Activated T-helper 1 cell treated with anti-CD3 and anti-CD28 coated beads, Interleukin-12 subunit alpha, Interleukin-12 subunit beta, Interleukin-2, Interleukin-4 antibody, amounts not matched to agents 30 ng/mL and 10 ng/mL and 1 ng/mL, durations not matched to agents 14 hours and 24 hours and 36 hours (primary cell): ENCODE measurements at regions of chr19 and their contacts with region 1.

Region 1: DNA sequence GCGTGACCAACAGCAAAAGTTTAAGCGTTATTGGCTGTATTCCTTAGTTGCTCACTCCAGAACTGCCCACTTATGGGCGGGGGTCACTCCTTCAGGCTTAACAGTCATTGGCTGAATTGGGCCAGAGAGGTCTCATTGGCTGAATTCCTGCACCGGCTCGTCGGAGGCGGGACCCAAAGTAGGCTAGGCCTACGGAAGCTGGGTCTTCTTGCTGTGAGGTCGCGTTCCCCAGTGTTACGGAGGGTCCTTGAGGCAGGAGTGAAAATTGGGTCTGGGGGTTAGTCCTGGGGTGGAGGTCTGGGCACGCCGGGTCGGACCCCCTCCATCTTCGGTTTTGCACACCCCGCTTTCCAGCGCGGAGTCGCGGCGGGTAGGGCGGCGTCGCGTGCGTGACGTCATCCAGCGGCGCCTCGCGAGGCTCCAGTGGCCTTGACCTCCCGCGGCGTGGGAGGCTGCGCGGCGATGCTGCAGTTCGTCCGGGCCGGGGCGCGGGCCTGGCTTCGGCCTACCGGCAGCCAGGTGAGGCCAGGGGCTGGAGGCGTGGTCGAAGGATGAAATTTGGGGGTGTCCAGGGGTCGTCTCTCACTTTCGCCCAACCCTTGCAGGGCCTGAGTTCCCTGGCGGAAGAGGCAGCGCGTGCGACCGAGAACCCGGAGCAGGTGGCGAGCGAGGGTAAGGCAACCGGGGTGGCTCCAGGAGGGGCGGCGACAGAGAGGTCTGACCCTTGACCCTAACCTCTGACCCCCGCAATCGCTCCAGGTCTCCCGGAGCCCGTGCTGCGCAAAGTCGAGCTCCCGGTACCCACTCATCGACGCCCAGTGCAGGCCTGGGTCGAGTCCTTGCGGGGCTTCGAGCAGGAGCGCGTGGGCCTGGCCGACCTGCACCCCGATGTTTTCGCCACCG is at the start of gene MRPL4:
- DNase-seq: peak; percentile 95
- H3K4me3 Mint-ChIP-seq: peak within 1 kb of the TSS; percentile 95
- H3K27ac Mint-ChIP-seq: peak within 1 kb of the TSS; percentile 96
- H3K4me1 Mint-ChIP-seq: peaks cover 19% of the 10 kb centered on the region
- H3K27me3 Mint-ChIP-seq: no peaks in the 10 kb centered on the region
- total RNA-seq, gene MRPL4: 163 and 168 TPM in 2 replicates

Region 2: GRCh38 chr19:9934132-9934950 is 317.7 kb before region 1 on chr19:
- intact Hi-C with region 1: loop called (anchors 1 kb)
- DNase-seq: peak; percentile 69
- H3K4me3 Mint-ChIP-seq: no peak overlapping the region
- H3K27ac Mint-ChIP-seq: no peak overlapping the region
- H3K4me1 Mint-ChIP-seq: peaks cover 26% of the 10 kb centered on the region
- H3K27me3 Mint-ChIP-seq: peaks cover 48% of the 10 kb centered on the region

Region 3: DNA sequence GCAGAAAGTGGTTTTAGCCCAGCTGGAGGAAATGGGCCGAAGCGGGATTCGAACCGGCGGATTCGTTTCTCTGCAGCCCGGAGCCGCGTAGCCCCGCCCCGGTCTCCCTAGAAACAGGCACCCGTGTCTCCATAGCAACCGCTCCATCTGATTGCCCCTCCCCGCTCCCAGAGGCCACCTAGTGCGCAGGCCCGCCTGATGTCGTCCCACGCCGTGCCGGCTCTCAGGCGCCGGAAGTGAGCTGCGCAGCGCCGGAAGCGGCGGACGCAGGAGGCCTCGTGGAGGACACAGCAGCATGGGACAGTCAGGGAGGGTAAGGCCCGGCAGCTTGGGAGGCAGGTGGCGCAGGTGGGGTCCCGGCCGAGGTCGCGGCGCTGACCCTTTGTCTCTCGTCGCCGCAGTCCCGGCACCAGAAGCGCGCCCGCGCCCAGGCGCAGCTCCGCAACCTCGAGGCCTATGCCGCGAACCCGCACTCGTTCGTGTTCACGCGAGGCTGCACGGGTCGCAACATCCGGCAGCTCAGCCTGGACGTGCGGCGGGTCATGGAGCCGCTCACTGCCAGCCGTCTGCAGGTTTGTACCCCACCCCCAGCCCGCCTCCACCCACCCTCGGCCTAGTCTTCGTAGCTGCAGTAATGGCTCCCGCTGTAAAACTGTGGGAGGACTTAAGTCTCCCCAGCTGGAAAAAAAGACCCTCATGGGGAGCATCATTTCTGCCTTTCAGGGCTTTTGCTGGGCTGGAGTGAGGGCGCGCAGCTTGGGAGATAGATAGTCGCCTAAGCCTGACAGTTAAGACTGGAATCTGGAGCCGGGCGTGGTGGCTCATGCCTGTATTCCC is 145.7 kb before region 1 on chr19 and contains the start of gene PPAN:
- intact Hi-C with region 1: loop called (anchors 2 kb)
- DNase-seq: peak; percentile 97
- H3K4me3 Mint-ChIP-seq: peak within 1 kb of the TSS; percentile 97
- H3K27ac Mint-ChIP-seq: peak within 1 kb of the TSS; percentile 99
- H3K4me1 Mint-ChIP-seq: peaks cover 60% of the 10 kb centered on the region
- H3K27me3 Mint-ChIP-seq: peaks cover 1% of the 10 kb centered on the region
- total RNA-seq, gene PPAN: 234 and 250 TPM in 2 replicates

Region 4: GRCh38 chr19:10120538-10121189 is 131.4 kb before region 1 on chr19:
- intact Hi-C with region 1: loop called (anchors 1 kb)
- DNase-seq: no peak
- H3K4me3 Mint-ChIP-seq: no peak overlapping the region
- H3K27ac Mint-ChIP-seq: no peak overlapping the region
- H3K4me1 Mint-ChIP-seq: peaks cover 11% of the 10 kb centered on the region
- H3K27me3 Mint-ChIP-seq: no peaks in the 10 kb centered on the region

Region 5: DNA sequence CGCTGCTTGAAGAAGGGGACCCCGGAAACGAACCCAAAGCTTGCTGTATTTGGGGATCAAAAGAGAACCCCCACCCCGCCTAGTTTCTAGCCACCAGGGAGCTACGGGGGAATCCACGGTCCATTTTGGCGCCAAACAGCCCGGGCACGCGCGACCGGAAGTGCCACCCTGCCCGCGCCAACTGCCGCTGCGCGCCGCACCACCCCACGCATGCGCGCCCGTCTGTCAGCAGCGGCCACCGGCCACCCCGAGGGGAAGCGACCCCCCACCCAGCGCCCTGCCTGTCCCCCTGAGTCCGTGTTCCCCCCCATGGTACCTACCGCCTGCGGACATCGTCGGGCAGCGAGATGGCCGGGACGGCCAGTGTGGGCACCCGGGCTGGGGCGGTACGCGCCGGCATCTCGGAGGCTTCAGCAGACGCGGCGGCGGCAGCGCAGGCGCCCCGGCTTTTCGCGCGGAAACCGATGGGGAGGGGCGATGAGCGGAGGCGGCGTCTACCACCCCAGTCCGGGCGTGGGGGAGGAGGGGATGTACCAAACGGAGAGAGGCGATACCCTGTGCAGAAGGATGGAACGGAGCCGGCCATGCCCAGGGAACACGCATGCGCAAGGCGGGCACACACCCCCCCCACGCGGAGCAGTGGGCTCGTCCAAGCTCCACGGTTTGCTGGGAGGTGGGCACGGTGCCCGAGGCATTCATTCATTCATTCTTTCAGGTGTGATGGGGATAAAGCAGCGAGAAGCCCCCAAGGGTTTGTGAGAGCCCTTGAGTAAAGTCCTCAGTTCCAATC is 57.3 kb before region 1 on chr19 and contains the start of gene DNMT1:
- intact Hi-C with region 1: loop called (anchors 1 kb)
- DNase-seq: peak; percentile 97
- H3K4me3 Mint-ChIP-seq: peak within 1 kb of the TSS; percentile 97
- H3K27ac Mint-ChIP-seq: peak within 1 kb of the TSS; percentile 97
- H3K4me1 Mint-ChIP-seq: peaks cover 16% of the 10 kb centered on the region
- H3K27me3 Mint-ChIP-seq: no peaks in the 10 kb centered on the region
- total RNA-seq, gene DNMT1: 411 and 425 TPM in 2 replicates

Region 6: GRCh38 chr19:10230861-10231611 is 21.0 kb before region 1 on chr19 and contains the start of gene S1PR2:
- intact Hi-C with region 1: loop called (anchors 1 kb)
- DNase-seq: peak; percentile 45
- H3K4me3 Mint-ChIP-seq: peak within 1 kb of the TSS; percentile 86
- H3K27ac Mint-ChIP-seq: peak within 1 kb of the TSS; percentile 82
- H3K4me1 Mint-ChIP-seq: peaks cover 23% of the 10 kb centered on the region
- H3K27me3 Mint-ChIP-seq: peaks cover 5% of the 10 kb centered on the region
- total RNA-seq, gene S1PR2: 15.4 and 16.0 TPM in 2 replicates

Region 7: DNA sequence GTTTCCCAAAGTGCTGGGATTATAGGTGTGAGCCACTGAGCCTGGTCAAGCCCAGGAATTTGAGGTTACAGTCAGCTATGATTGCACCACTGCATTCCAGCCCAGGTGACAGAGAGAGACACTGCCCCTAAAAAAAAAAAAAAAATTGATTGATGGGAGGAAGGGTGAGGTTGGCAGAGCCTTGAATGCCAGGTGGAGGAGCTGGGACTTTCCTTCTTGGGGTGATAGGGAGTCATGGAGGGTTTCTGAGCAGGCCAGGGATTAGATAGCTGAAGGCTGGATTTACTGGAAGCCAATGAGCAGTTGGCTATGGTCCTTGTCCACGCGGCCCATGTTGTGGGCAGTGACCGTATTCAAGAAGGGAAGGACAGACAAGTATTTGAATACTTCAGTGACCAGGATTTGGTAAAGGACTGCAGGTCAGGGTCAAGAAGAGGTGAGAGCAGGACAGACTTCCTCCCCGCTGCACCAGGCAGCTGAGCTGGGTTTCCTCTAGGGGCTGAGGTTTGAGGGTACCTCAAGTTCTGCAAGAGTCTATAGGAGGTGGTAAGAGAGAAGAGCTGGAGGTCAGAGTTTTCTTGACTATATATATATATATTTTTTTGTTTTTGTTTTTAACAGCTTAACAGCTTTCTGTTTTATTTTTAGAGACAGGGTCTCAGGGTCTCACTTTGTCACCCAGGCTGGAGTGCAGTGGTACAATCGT is 27.8 kb after region 1 on chr19:
- intact Hi-C with region 1: no loop called
- DNase-seq: no peak
- H3K4me3 Mint-ChIP-seq: no peak overlapping the region
- H3K27ac Mint-ChIP-seq: peak overlapping the region; percentile 65
- H3K4me1 Mint-ChIP-seq: peaks cover 27% of the 10 kb centered on the region
- H3K27me3 Mint-ChIP-seq: no peaks in the 10 kb centered on the region